Lower leg skin (tissue), 4 donors: ENCODE measurements at regions of chr5 and their contacts with region 1.

Region 1: DNA sequence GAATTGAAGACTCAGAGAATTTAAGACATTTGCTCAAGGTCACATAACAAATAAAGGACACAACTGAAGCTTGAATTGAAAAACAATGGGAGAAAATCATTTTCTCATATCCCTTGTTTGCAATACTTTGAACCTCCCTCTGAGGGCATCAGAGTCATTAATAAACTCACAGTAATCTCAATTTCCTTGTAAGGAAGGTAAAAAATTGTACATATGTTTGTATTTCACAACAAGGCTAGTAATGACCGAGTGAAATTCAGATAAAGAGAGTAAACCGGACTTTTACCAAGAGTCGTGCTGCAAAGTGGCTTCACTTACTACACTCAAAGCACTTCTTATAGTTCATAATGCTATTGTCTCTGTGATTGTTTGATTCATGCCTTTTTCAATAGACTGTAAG is 665.0 kb downstream of the NR2F1-AS1 start:
- DNase-seq: no peak
- H3K4me3 ChIP-seq: no peak overlapping the region
- CTCF ChIP-seq: no peak
- POLR2A ChIP-seq: no peak

Region 2: DNA sequence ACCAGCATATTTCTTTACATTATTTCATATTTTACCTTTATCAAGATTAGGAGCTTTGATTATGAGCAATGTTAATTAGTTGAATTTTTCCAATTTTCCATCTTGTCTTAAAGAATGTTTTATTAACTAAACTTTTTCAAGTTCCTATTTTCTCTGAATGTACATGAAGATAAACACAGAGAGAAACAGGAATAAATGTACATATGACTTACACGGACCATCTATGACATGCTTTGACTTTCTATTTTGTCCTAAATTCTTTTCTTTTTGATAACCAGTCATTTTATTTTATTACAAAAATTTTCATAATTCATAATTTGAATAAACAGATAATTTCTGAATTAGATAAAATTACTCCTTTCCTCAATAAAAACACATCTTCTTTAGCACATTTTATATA is 494.1 kb before region 1 on chr5:
- intact Hi-C with region 1: no loop called
- DNase-seq: no peak
- H3K4me3 ChIP-seq: no peak overlapping the region
- CTCF ChIP-seq: no peak
- POLR2A ChIP-seq: no peak

Region 3: GRCh38 chr5:92860061-92860460 is 56.0 kb before region 1 on chr5:
- intact Hi-C with region 1: loop called (anchors 2 kb)
- DNase-seq: no peak
- H3K4me3 ChIP-seq: no peak overlapping the region
- CTCF ChIP-seq: no peak
- POLR2A ChIP-seq: no peak